Activated CD4-positive, alpha-beta memory T cell treated with anti-CD3 and anti-CD28 coated beads for 36 hours (primary cell): ENCODE measurements at regions of chr6 and their contacts with region 1.

Region 1: GRCh38 chr6:105898286-105898685 is 187.8 kb upstream of the PRDM1 start:
- DNase-seq: peak; percentile 67
- H3K4me3 Mint-ChIP-seq: no peak overlapping the region
- H3K27ac Mint-ChIP-seq: no peak overlapping the region
- H3K4me1 Mint-ChIP-seq: peaks cover 14% of the 10 kb centered on the region
- H3K27me3 Mint-ChIP-seq: peaks cover 9% of the 10 kb centered on the region

Region 2: GRCh38 chr6:105757512-105758200 is 140.6 kb before region 1 on chr6:
- CTCF ChIA-PET with region 1: no interaction called
- POLR2A ChIA-PET with region 1: no interaction called
- intact Hi-C with region 1: loop called (anchors 2 kb)
- DNase-seq: peak; percentile 30
- H3K4me3 Mint-ChIP-seq: no peak overlapping the region
- H3K27ac Mint-ChIP-seq: no peak overlapping the region
- H3K4me1 Mint-ChIP-seq: peaks cover 28% of the 10 kb centered on the region
- H3K27me3 Mint-ChIP-seq: peaks cover 8% of the 10 kb centered on the region

Region 3: GRCh38 chr6:105810105-105810921 is 88.0 kb before region 1 on chr6:
- CTCF ChIA-PET with region 1: no interaction called
- POLR2A ChIA-PET with region 1: interaction called, 8 read pairs
- intact Hi-C with region 1: loop called (anchors 1 kb)
- DNase-seq: peak; percentile 82
- H3K4me3 Mint-ChIP-seq: no peak overlapping the region
- H3K27ac Mint-ChIP-seq: peak overlapping the region; percentile 53
- H3K4me1 Mint-ChIP-seq: peaks cover 42% of the 10 kb centered on the region
- H3K27me3 Mint-ChIP-seq: peaks cover 10% of the 10 kb centered on the region

Region 4: GRCh38 chr6:105880030-105880492 is 18.2 kb before region 1 on chr6:
- CTCF ChIA-PET with region 1: no interaction called
- POLR2A ChIA-PET with region 1: interaction called, 5 read pairs
- intact Hi-C with region 1: loop called (anchors 1 kb)
- DNase-seq: peak; percentile 75
- H3K4me3 Mint-ChIP-seq: peak overlapping the region; percentile 31
- H3K27ac Mint-ChIP-seq: peak overlapping the region; percentile 44
- H3K4me1 Mint-ChIP-seq: peaks cover 26% of the 10 kb centered on the region
- H3K27me3 Mint-ChIP-seq: peaks cover 37% of the 10 kb centered on the region

Region 5: DNA sequence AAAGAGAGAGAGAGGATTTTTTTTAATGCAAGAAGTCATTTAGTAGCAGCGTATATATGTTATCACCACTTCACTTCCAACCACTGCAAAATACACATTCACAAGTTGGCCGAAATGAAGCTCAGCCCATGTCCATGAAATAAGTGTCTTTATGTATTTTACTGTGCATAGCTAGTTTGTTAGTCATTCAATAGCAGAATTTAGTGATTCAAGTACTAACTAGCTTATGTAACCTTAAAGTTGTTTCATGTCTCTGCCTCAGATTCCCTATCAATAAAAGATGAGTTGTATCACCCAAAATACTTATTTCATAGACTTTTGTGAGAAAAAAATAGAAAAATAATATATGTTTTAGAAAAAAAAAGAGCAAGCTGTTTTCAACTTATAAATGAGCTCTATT is 34.2 kb after region 1 on chr6:
- CTCF ChIA-PET with region 1: no interaction called
- POLR2A ChIA-PET with region 1: no interaction called
- intact Hi-C with region 1: no loop called
- DNase-seq: no peak
- H3K4me3 Mint-ChIP-seq: no peak overlapping the region
- H3K27ac Mint-ChIP-seq: no peak overlapping the region
- H3K4me1 Mint-ChIP-seq: no peaks in the 10 kb centered on the region
- H3K27me3 Mint-ChIP-seq: peaks cover 2% of the 10 kb centered on the region

Region 6: GRCh38 chr6:105967917-105968584 is 69.8 kb after region 1 on chr6:
- CTCF ChIA-PET with region 1: no interaction called
- POLR2A ChIA-PET with region 1: no interaction called
- intact Hi-C with region 1: no loop called
- DNase-seq: no peak
- H3K4me3 Mint-ChIP-seq: no peak overlapping the region
- H3K27ac Mint-ChIP-seq: no peak overlapping the region
- H3K4me1 Mint-ChIP-seq: no peaks in the 10 kb centered on the region
- H3K27me3 Mint-ChIP-seq: peaks cover 6% of the 10 kb centered on the region

Region 7: GRCh38 chr6:106085984-106086813 is 187.9 kb after region 1 on chr6 and contains the start of gene PRDM1:
- CTCF ChIA-PET with region 1: interaction called, 3 read pairs
- POLR2A ChIA-PET with region 1: interaction called, 4 read pairs
- intact Hi-C with region 1: loop called (anchors 1 kb)
- DNase-seq: peak; percentile 89
- H3K4me3 Mint-ChIP-seq: peak within 1 kb of the TSS; percentile 90
- H3K27ac Mint-ChIP-seq: peak within 1 kb of the TSS; percentile 94
- H3K4me1 Mint-ChIP-seq: peaks cover 73% of the 10 kb centered on the region
- H3K27me3 Mint-ChIP-seq: peaks cover 2% of the 10 kb centered on the region
- total RNA-seq, gene PRDM1: 70.9 to 78.9 TPM